ENCODE measurements at regions of chr1 and their contacts with region 1.

Region 1: GRCh38 chr1:51906306-51907078 is 28.0 kb upstream of the NRDC start:
- DNase-seq: no peak
- H3K4me3 ChIP-seq: no peak overlapping the region
- H3K27ac ChIP-seq: no peak overlapping the region
- H3K4me1 ChIP-seq: no peaks in the 10 kb centered on the region
- H3K27me3 ChIP-seq: peaks cover 9% of the 10 kb centered on the region
- CTCF ChIP-seq: no peak
- EP300 ChIP-seq: no peak
- POLR2A ChIP-seq: no peak

Region 2: GRCh38 chr1:51750218-51750617 is 156.3 kb before region 1 on chr1:
- in situ Hi-C with region 1: no loop called
- intact Hi-C with region 1: no loop called
- DNase-seq: no peak
- H3K4me3 ChIP-seq: no peak overlapping the region
- H3K27ac ChIP-seq: no peak overlapping the region
- H3K4me1 ChIP-seq: no peaks in the 10 kb centered on the region
- H3K27me3 ChIP-seq: no peaks in the 10 kb centered on the region
- CTCF ChIP-seq: no peak
- EP300 ChIP-seq: no peak
- POLR2A ChIP-seq: no peak

Region 3: GRCh38 chr1:51990478-51990965 is 84.0 kb after region 1 on chr1 and contains the start of gene RAB3B:
- in situ Hi-C with region 1: loop called in 2 of 4 experiments (anchors 10 kb)
- intact Hi-C with region 1: no loop called
- DNase-seq: peak; percentile 81
- H3K4me3 ChIP-seq: peak within 1 kb of the TSS; percentile 23 to 53 (median 40)
- H3K27ac ChIP-seq: no peak within 1 kb of the TSS
- H3K4me1 ChIP-seq: peaks cover 0 to 6% (median 4%) of the 10 kb centered on the region in 4 donors
- H3K27me3 ChIP-seq: peaks cover 49% of the 10 kb centered on the region
- CTCF ChIP-seq: no peak
- EP300 ChIP-seq: no peak
- POLR2A ChIP-seq: no peak
- total RNA-seq, gene RAB3B: 1.8 to 4.5 (median 3.4) TPM

Measured in transverse colon (tissue), 4 donors.